ENCODE measurements at regions of chr11 and their contacts with region 1.

Region 1: DNA sequence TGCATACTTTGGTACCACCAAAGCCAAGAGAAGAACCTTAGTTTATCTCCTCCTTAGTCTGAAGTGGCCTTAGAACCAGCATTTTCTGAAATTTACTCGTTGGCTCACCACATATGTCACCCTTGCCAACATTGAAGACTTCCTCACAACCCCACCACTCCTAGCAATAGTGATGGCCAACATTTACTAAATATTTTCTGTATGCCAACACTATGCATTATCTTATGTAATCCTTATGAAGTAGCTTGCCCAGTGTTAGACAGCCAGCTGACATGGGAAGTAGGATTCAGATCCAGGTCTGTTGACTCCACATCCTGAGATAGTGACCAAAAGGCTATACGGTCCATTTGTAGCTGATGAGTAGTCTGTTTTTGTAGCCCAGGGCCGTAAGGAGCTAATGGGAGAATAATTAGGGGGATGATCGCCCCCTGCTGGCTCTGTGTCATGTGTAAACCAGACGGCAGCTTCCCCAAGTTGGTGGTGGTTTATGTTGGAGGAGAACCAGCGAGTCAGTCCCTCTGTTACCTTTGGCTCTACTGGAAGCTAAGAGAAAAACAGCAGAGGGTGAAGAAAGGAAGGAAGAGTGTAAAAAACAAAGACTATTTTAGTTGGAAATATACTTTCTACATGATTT is 120.5 kb upstream of the RASSF10 start:
- DNase-seq: peak; percentile 52 to 57 (median 56)
- H3K4me3 ChIP-seq: no peak overlapping the region
- H3K4me3 Mint-ChIP-seq: no peak overlapping the region
- H3K27ac ChIP-seq: no peak overlapping the region
- H3K27ac Mint-ChIP-seq: no peak overlapping the region
- H3K4me1 ChIP-seq: no peaks in the 10 kb centered on the region
- H3K4me1 Mint-ChIP-seq: peaks cover 0 to 5% (median 1%) of the 10 kb centered on the region in 4 donors
- H3K27me3 ChIP-seq: no peaks in the 10 kb centered on the region
- H3K27me3 Mint-ChIP-seq: peaks cover 3 to 16% of the 10 kb centered on the region in 2 donors

Region 2: DNA sequence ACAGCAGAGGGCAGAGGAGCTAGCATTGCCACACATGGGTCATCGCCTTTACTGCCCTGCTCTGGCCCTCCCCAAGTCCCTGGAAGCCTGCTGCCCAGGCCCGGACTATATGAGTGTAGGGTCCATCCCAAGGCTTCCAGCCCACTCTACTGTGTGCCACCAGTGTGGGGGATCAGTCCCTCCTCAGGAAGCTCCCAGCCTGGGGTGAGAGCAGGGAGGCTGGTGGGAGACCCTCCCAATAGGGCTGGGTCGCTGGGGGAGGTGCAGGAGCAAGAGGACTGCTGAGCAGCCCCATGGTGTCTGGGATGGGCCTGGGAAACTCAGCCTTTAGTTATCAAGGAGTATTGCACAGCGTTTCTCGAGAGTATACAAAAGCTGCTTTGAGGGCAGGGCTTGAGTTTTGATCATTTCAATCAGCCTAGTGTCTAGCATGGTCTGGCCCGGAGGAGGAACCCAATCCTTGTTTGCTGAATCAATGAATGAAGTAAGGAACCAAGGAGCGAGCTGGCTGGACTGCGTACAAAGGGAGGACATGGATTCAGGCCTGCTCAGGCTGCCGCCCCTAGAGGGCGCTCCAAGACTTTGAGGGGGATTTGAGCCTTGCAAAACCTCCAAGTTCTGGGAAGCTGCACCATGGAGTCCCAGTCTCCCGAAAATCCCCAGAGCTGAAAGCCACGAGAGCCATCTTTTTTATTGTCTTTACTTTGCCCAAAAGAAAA is 600.3 kb before region 1 on chr11:
- CTCF ChIA-PET with region 1: interaction called, 96 read pairs
- POLR2A ChIA-PET with region 1: no interaction called
- intact Hi-C with region 1: loop called (anchors 1 kb)
- DNase-seq: peak in 4 of 5 donors; percentile 25 to 34 (median 26)
- H3K4me3 ChIP-seq: no peak overlapping the region
- H3K4me3 Mint-ChIP-seq: peak overlapping the region in 1 of 8 donors; percentile 25
- H3K27ac ChIP-seq: no peak overlapping the region
- H3K27ac Mint-ChIP-seq: peak overlapping the region in 1 of 7 donors; percentile 29
- H3K4me1 ChIP-seq: peaks cover 14% of the 10 kb centered on the region
- H3K4me1 Mint-ChIP-seq: peaks cover 7 to 28% (median 19%) of the 10 kb centered on the region in 4 donors
- H3K27me3 ChIP-seq: no peaks in the 10 kb centered on the region
- H3K27me3 Mint-ChIP-seq: peaks cover 0 to 2% of the 10 kb centered on the region in 2 donors

Region 3: GRCh38 chr11:12319461-12319951 is 569.1 kb before region 1 on chr11:
- CTCF ChIA-PET with region 1: interaction called, 13 read pairs
- POLR2A ChIA-PET with region 1: no interaction called
- intact Hi-C with region 1: no loop called
- DNase-seq: no peak
- H3K4me3 ChIP-seq: no peak overlapping the region
- H3K4me3 Mint-ChIP-seq: no peak overlapping the region
- H3K27ac ChIP-seq: no peak overlapping the region
- H3K27ac Mint-ChIP-seq: no peak overlapping the region
- H3K4me1 ChIP-seq: peaks cover 7% of the 10 kb centered on the region
- H3K4me1 Mint-ChIP-seq: peaks cover 6 to 18% (median 9%) of the 10 kb centered on the region in 4 donors
- H3K27me3 ChIP-seq: no peaks in the 10 kb centered on the region
- H3K27me3 Mint-ChIP-seq: no peaks in the 10 kb centered on the region

Region 4: GRCh38 chr11:12411806-12412727 is 476.6 kb before region 1 on chr11:
- CTCF ChIA-PET with region 1: interaction called, 6 read pairs
- POLR2A ChIA-PET with region 1: no interaction called
- intact Hi-C with region 1: loop called (anchors 1 kb)
- DNase-seq: peak in 4 of 5 donors; percentile 9 to 38 (median 16)
- H3K4me3 ChIP-seq: no peak overlapping the region
- H3K4me3 Mint-ChIP-seq: no peak overlapping the region
- H3K27ac ChIP-seq: no peak overlapping the region
- H3K27ac Mint-ChIP-seq: peak overlapping the region in 1 of 7 donors; percentile 5
- H3K4me1 ChIP-seq: no peaks in the 10 kb centered on the region
- H3K4me1 Mint-ChIP-seq: no peaks in the 10 kb centered on the region
- H3K27me3 ChIP-seq: peaks cover 4% of the 10 kb centered on the region
- H3K27me3 Mint-ChIP-seq: peaks cover 0 to 5% of the 10 kb centered on the region in 2 donors

Region 5: GRCh38 chr11:12599408-12600143 is 289.1 kb before region 1 on chr11:
- CTCF ChIA-PET with region 1: interaction called, 17 read pairs
- POLR2A ChIA-PET with region 1: no interaction called
- intact Hi-C with region 1: loop called (anchors 1 kb)
- DNase-seq: peak in 3 of 5 donors; percentile 0 to 23 (median 8)
- H3K4me3 ChIP-seq: no peak overlapping the region
- H3K4me3 Mint-ChIP-seq: no peak overlapping the region
- H3K27ac ChIP-seq: no peak overlapping the region
- H3K27ac Mint-ChIP-seq: no peak overlapping the region
- H3K4me1 ChIP-seq: peaks cover 19% of the 10 kb centered on the region
- H3K4me1 Mint-ChIP-seq: peaks cover 14 to 26% (median 19%) of the 10 kb centered on the region in 4 donors
- H3K27me3 ChIP-seq: no peaks in the 10 kb centered on the region
- H3K27me3 Mint-ChIP-seq: peaks cover 15 to 22% of the 10 kb centered on the region in 2 donors

Region 6: DNA sequence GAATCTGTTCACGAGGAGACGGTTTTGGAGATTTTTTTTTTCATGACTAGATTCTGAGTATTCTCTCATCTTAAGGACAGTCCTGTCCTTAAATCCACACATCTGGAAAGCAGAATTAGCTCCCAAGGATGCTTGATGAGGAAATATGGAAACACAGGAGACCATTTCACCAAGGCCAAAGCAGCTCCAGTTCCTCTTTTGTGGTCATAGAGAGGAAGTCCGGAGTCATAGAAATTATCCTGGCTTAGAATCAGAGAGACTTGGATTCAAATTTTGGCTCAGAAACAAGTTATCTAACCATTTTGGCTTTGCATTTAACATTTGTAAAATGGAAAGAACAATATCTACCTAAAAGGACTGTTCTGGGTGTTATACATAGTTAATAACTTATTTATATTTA is 221.7 kb before region 1 on chr11:
- CTCF ChIA-PET with region 1: no interaction called
- POLR2A ChIA-PET with region 1: no interaction called
- intact Hi-C with region 1: no loop called
- DNase-seq: no peak
- H3K4me3 ChIP-seq: no peak overlapping the region
- H3K4me3 Mint-ChIP-seq: no peak overlapping the region
- H3K27ac ChIP-seq: no peak overlapping the region
- H3K27ac Mint-ChIP-seq: no peak overlapping the region
- H3K4me1 ChIP-seq: no peaks in the 10 kb centered on the region
- H3K4me1 Mint-ChIP-seq: peaks cover 0 to 2% (median under 1%) of the 10 kb centered on the region in 4 donors
- H3K27me3 ChIP-seq: peaks cover 11% of the 10 kb centered on the region
- H3K27me3 Mint-ChIP-seq: peaks cover 48 to 56% of the 10 kb centered on the region in 2 donors

Region 7: DNA sequence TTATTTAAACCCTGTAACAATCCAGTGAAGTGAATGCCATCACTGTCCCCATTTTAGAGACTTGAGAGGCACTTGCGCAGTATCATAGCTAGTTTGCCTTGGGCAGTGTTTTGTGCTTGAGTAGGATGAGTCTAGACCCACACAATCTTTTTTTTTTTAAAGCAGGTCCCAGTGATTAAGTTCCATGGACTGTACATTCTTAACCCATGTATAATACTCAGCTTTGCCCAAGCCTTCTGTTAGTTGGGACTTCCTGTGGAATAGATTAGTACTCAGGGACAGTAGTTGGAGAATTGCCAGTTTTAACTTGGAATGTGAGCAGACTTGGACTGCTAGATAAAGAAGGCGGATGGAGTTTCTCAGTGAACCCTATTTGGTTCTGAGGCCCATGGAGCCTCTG is 11.9 kb after region 1 on chr11:
- CTCF ChIA-PET with region 1: interaction called, 37 read pairs
- POLR2A ChIA-PET with region 1: no interaction called
- intact Hi-C with region 1: no loop called
- DNase-seq: no peak
- H3K4me3 ChIP-seq: no peak overlapping the region
- H3K4me3 Mint-ChIP-seq: no peak overlapping the region
- H3K27ac ChIP-seq: no peak overlapping the region
- H3K27ac Mint-ChIP-seq: no peak overlapping the region
- H3K4me1 ChIP-seq: no peaks in the 10 kb centered on the region
- H3K4me1 Mint-ChIP-seq: peaks cover 0 to 3% (median 0%) of the 10 kb centered on the region in 4 donors
- H3K27me3 ChIP-seq: no peaks in the 10 kb centered on the region
- H3K27me3 Mint-ChIP-seq: peaks cover 5 to 10% of the 10 kb centered on the region in 2 donors